ENCODE measurements at regions of chr12 and their contacts with region 1.

Region 1: GRCh38 chr12:124767066-124767821 is 96.4 kb downstream of the SCARB1 start:
- DNase-seq: peak; percentile 67
- ATAC-seq: peak; percentile 85
- H3K4me3 ChIP-seq: no peak overlapping the region
- H3K27ac ChIP-seq: 0 out of 2 replicates have a peak overlapping the region, but pooled peaks have one; percentile 7
- H3K4me1 ChIP-seq: peaks cover 30% of the 10 kb centered on the region
- H3K27me3 ChIP-seq: no peaks in the 10 kb centered on the region
- CTCF ChIP-seq: peak; percentile 96 to 98 (median 97); a peak in 5 of 6 replicates
- EP300 ChIP-seq: 0 out of 4 replicates have a peak, but pooled peaks of 1 of the 2 experiments have one; percentile 20
- POLR2A ChIP-seq: no peak
- RAD21 ChIP-seq: peak; percentile 94

Region 2: GRCh38 chr12:123436017-123436964 is 1331.0 kb before region 1 on chr12 and contains the start of gene RILPL2:
- CTCF ChIA-PET with region 1: no interaction called
- POLR2A ChIA-PET with region 1: no interaction called
- RAD21 ChIA-PET with region 1: no interaction called
- SMC1A ChIA-PET with region 1: no interaction called
- in situ Hi-C with region 1: no loop called
- intact Hi-C with region 1: loop called (anchors 10 kb)
- DNase-seq: peak; percentile 86
- ATAC-seq: peak; percentile 84
- H3K4me3 ChIP-seq: peak within 1 kb of the TSS; percentile 82
- H3K27ac ChIP-seq: peak within 1 kb of the TSS; percentile 95
- H3K4me1 ChIP-seq: peaks cover 2% of the 10 kb centered on the region; the same call in 1 of the 2 replicates
- H3K27me3 ChIP-seq: no peaks in the 10 kb centered on the region
- CTCF ChIP-seq: no peak
- EP300 ChIP-seq: no peak; a peak in 1 of 4 replicates
- POLR2A ChIP-seq: peak; percentile 81
- RAD21 ChIP-seq: no peak; the same call in 1 of the 2 replicates
- polyA plus RNA-seq, gene RILPL2: 3.5 to 8.3 TPM

Region 3: GRCh38 chr12:124321040-124321481 is 446.2 kb before region 1 on chr12:
- CTCF ChIA-PET with region 1: no interaction called
- POLR2A ChIA-PET with region 1: no interaction called
- RAD21 ChIA-PET with region 1: no interaction called
- SMC1A ChIA-PET with region 1: no interaction called
- in situ Hi-C with region 1: no loop called
- intact Hi-C with region 1: loop called (anchors 2 kb)
- DNase-seq: peak; percentile 24
- ATAC-seq: peak; percentile 93
- H3K4me3 ChIP-seq: no peak overlapping the region
- H3K27ac ChIP-seq: no peak overlapping the region
- H3K4me1 ChIP-seq: no peaks in the 10 kb centered on the region
- H3K27me3 ChIP-seq: no peaks in the 10 kb centered on the region
- CTCF ChIP-seq: peak; percentile 91 to 97 (median 93); a peak in 5 of 6 replicates
- EP300 ChIP-seq: no peak
- POLR2A ChIP-seq: 0 out of 2 replicates have a peak, but pooled peaks have one; percentile 42
- RAD21 ChIP-seq: peak; percentile 88

Region 4: GRCh38 chr12:124480469-124481256 is 286.6 kb before region 1 on chr12:
- CTCF ChIA-PET with region 1: interaction called, 3 read pairs
- POLR2A ChIA-PET with region 1: no interaction called
- RAD21 ChIA-PET with region 1: no interaction called
- SMC1A ChIA-PET with region 1: no interaction called
- in situ Hi-C with region 1: no loop called
- intact Hi-C with region 1: loop called (anchors 5 kb)
- DNase-seq: peak; percentile 84
- ATAC-seq: peak; percentile 85
- H3K4me3 ChIP-seq: peak overlapping the region; percentile 51
- H3K27ac ChIP-seq: peak overlapping the region; percentile 86
- H3K4me1 ChIP-seq: peaks cover 66% of the 10 kb centered on the region
- H3K27me3 ChIP-seq: no peaks in the 10 kb centered on the region
- CTCF ChIP-seq: no peak
- EP300 ChIP-seq: peak in 1 of 2 experiments; percentile 50; a peak in 1 of 4 replicates
- POLR2A ChIP-seq: no peak; the same call in none of the 2 replicates
- RAD21 ChIP-seq: peak; percentile 16; the same call in 1 of the 2 replicates

Region 5: GRCh38 chr12:124567661-124568373 is 199.4 kb before region 1 on chr12:
- CTCF ChIA-PET with region 1: interaction called, 6 read pairs
- POLR2A ChIA-PET with region 1: no interaction called
- RAD21 ChIA-PET with region 1: interaction called, 5 read pairs
- SMC1A ChIA-PET with region 1: interaction called, 6 read pairs
- in situ Hi-C with region 1: no loop called
- intact Hi-C with region 1: loop called (anchors 1 kb)
- DNase-seq: no peak
- ATAC-seq: peak; percentile 70
- H3K4me3 ChIP-seq: peak overlapping the region; percentile 95
- H3K27ac ChIP-seq: peak overlapping the region; percentile 82
- H3K4me1 ChIP-seq: peaks cover 25% of the 10 kb centered on the region
- H3K27me3 ChIP-seq: no peaks in the 10 kb centered on the region
- CTCF ChIP-seq: peak in 1 of 3 experiments; percentile 14; a peak in 2 of 6 replicates
- EP300 ChIP-seq: no peak
- POLR2A ChIP-seq: peak; percentile 57
- RAD21 ChIP-seq: no peak

Region 6: GRCh38 chr12:124847113-124848074 is 80.2 kb after region 1 on chr12:
- CTCF ChIA-PET with region 1: no interaction called
- POLR2A ChIA-PET with region 1: no interaction called
- RAD21 ChIA-PET with region 1: no interaction called
- SMC1A ChIA-PET with region 1: no interaction called
- in situ Hi-C with region 1: no loop called
- intact Hi-C with region 1: no loop called
- DNase-seq: no peak
- ATAC-seq: no peak
- H3K4me3 ChIP-seq: no peak overlapping the region
- H3K27ac ChIP-seq: no peak overlapping the region
- H3K4me1 ChIP-seq: no peaks in the 10 kb centered on the region
- H3K27me3 ChIP-seq: no peaks in the 10 kb centered on the region
- CTCF ChIP-seq: no peak
- EP300 ChIP-seq: no peak
- POLR2A ChIP-seq: no peak
- RAD21 ChIP-seq: no peak

Region 7: DNA sequence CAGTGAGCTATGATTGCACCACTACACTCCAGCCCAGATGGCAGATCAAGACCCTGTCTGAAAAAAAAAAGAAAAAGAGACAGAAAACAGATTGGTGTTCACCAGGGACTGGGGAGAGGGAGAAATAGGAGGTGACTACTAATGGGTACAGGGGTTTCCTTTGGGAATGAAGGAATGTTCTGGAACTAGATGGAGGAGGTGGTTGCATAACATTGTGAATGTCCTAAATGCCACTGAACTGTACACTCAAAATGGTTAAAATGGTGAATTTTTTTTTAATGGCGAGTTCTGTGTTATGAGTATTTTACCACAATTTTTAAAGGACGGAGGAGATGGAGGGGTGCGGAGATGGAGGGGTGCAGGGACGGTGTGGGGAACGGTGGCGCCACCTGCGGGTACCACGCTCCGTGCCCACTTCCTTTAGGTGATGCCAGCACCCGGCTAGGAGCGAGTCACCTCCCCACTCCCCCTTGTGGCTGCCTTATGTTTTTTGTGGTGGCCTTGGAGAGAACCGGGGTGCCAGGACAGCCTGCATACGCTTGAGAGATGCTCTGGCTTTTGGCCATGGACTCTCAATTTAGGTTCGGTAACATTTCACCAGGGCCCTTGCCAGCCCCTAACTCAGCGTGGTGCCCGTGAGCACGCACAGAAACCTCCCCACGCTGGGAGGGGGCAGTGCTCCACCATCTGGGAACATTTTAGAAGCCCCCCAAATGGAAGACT is 131.1 kb after region 1 on chr12:
- CTCF ChIA-PET with region 1: interaction called, 11 read pairs
- POLR2A ChIA-PET with region 1: interaction called, 3 read pairs
- RAD21 ChIA-PET with region 1: interaction called, 5 read pairs
- SMC1A ChIA-PET with region 1: interaction called, 8 read pairs
- in situ Hi-C with region 1: no loop called
- intact Hi-C with region 1: no loop called
- DNase-seq: no peak
- ATAC-seq: peak; percentile 74
- H3K4me3 ChIP-seq: no peak overlapping the region; the same call in 1 of the 2 replicates
- H3K27ac ChIP-seq: peak overlapping the region; percentile 27
- H3K4me1 ChIP-seq: peaks cover 32% of the 10 kb centered on the region
- H3K27me3 ChIP-seq: no peaks in the 10 kb centered on the region
- CTCF ChIP-seq: peak; percentile 72 to 81 (median 78)
- EP300 ChIP-seq: no peak
- POLR2A ChIP-seq: no peak
- RAD21 ChIP-seq: peak; percentile 60

Measured in GM12878 (cell line).